K562 (cell line): ENCODE measurements at regions of chr7 and their contacts with region 1.

Region 1: DNA sequence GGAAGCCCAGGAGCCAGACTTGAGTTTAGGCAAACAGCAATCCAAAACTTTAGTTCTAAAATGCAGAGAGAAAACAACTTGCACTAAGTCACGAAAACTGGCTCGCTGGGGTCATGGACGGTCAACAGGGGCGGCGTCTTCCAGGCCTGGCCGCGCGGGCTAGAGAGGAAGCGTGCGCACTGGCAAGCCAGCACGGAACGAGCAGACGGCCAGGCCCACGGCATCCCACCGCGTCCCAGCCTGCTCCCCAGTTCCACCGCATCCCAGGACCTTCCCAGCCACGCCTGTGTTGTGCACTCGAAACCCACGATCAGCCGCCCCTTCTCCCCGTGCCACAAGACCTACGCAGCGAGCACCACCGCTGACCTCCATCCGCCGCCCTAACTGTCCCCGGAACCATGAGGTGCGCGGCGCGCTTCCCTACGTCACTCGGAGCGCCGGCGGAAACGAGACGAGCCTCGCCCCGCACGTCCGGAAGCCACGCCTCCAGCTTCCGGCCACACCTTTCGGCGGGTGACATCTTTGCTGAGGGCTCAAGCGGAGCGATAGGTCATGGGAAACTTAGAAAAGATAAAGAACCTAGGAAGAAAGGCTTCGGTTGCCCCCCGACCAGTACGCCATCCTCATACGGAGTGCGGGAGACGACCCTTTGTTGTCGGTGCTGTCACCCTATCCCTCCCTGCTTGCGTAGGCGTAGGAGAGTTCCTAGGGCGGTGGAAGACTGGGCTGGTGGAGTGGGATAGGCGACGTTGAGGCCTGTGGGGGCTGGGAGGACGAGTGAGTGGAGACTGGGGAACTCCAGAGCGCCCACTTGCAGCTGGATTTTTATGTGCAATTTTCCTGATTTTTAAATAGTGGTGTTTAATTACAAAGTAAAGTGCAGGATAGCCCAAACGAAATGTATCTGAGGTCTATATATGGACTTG is at the start of gene TBRG4:
- DNase-seq: peak; percentile 89 to 98 (median 91)
- ATAC-seq: peak; percentile 91
- H3K4me3 ChIP-seq: peak within 1 kb of the TSS; percentile 95
- H3K27ac ChIP-seq: peak within 1 kb of the TSS; percentile 99
- H3K4me1 ChIP-seq: peaks cover 12 to 24% of the 10 kb centered on the region in 2 experiments; a peak in 4 of 5 replicates
- H3K27me3 ChIP-seq: no peaks in the 10 kb centered on the region
- CTCF ChIP-seq: peak; percentile 57 to 73 (median 68)
- EP300 ChIP-seq: no peak; the same call in 1 of the 2 replicates
- POLR2A ChIP-seq: peak; percentile 99
- RAD21 ChIP-seq: peak in 1 of 2 experiments; percentile 17; a peak in 2 of 4 replicates
- polyA plus RNA-seq, gene TBRG4: 11.2 to 34.9 TPM

Region 2: DNA sequence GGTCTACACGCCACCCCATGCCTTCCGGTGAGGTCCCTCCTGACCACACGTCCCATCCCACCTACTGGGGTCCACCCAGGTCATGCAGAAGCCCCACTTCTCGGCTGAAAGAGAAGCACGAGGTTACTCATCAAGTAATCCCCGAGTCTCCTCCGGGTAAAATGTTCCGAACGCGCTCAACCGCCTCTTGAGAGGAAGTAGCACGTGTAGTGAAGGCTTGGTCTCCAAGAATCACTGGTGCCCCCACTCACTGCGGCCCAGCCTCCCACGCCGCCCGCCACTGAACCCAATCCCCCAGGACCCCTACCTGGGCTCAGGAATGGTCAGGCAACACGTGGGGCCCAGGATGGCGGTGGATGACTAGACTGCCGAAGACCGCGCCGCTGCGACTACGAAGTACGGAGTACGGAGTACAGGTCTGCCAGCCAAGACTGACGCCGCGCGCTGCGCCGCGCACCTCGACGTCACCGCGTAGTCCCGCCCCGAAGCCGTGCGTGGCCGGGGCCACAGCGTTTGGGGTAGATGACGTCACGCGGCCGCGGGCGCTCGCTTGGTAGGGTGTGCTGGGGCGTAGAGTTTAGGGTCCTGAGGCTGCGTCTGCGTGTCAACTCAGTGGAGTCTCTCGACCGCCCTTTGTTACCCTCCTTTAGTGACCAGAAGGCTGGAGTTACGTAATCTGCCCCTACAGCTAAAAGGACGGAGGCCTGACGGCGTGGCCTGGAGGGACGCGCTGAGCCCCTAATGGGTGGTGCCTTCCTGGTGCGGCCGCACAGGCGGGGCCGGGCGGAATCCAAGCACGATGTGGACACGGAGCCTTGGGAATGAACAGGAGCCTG is 125.1 kb before region 1 on chr7:
- CTCF ChIA-PET with region 1: no interaction called
- POLR2A ChIA-PET with region 1: interaction called, 11 read pairs
- in situ Hi-C with region 1: no loop called
- intact Hi-C with region 1: loop called (anchors 5 kb)
- DNase-seq: peak; percentile 81 to 98 (median 86)
- ATAC-seq: peak; percentile 85
- H3K4me3 ChIP-seq: peak overlapping the region; percentile 98
- H3K27ac ChIP-seq: peak overlapping the region; percentile 97
- H3K4me1 ChIP-seq: peaks cover 22 to 38% of the 10 kb centered on the region in 2 experiments; a peak in 4 of 5 replicates
- H3K27me3 ChIP-seq: no peaks in the 10 kb centered on the region
- CTCF ChIP-seq: no peak
- EP300 ChIP-seq: no peak; the same call in none of the 2 replicates
- POLR2A ChIP-seq: peak; percentile 99
- RAD21 ChIP-seq: 0 out of 4 replicates have a peak, but pooled peaks of 1 of the 2 experiments have one; percentile 6

Region 3: DNA sequence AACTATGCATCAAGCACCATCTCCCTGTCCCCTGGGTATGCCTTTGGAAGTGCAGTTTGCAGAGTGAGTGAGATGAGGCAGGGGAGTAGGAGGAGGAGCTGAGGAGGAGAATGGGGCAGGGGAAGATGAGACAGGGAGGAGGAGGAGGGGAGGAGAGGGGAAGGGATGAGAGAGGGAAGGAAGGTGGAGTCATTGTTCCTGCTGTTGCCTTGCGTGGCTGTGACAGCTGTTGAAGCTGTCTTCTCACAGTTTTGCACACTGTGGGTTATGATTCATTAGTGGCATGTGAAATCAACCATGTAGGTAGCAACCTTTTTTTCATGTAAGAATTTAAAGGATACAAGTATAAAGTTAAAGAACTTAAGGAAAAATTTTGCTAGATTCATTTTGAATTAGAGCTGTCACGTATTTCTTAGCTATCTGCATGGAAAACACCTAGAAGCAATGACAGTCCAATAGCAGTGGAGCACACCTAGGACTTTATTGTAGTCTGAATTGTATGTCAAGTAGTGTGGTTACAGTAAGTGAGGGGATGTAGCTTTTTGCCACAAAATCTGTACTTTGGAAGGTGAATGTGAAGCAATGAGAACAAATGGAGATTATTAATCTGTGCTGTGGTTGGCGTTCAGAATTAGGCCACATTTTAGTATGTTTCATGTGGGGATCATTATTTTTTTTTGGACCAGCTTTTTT is 89.8 kb before region 1 on chr7:
- CTCF ChIA-PET with region 1: no interaction called
- POLR2A ChIA-PET with region 1: no interaction called
- in situ Hi-C with region 1: no loop called
- intact Hi-C with region 1: no loop called
- DNase-seq: peak in 1 of 4 experiments; percentile 29
- ATAC-seq: peak; percentile 61
- H3K4me3 ChIP-seq: no peak overlapping the region
- H3K27ac ChIP-seq: no peak overlapping the region
- H3K4me1 ChIP-seq: peaks cover 4 to 6% of the 10 kb centered on the region in 2 experiments; a peak in 2 of 5 replicates
- H3K27me3 ChIP-seq: no peaks in the 10 kb centered on the region
- CTCF ChIP-seq: no peak
- EP300 ChIP-seq: no peak
- POLR2A ChIP-seq: no peak
- RAD21 ChIP-seq: no peak

Region 4: GRCh38 chr7:45098983-45099839 is 12.3 kb before region 1 on chr7:
- CTCF ChIA-PET with region 1: no interaction called
- POLR2A ChIA-PET with region 1: interaction called, 11 read pairs
- in situ Hi-C with region 1: no loop called
- intact Hi-C with region 1: no loop called
- DNase-seq: peak in 1 of 4 experiments; percentile 25
- ATAC-seq: peak; percentile 79
- H3K4me3 ChIP-seq: no peak overlapping the region
- H3K27ac ChIP-seq: no peak overlapping the region
- H3K4me1 ChIP-seq: peaks cover 0 to 13% of the 10 kb centered on the region in 2 experiments; a peak in 1 of 5 replicates
- H3K27me3 ChIP-seq: no peaks in the 10 kb centered on the region
- CTCF ChIP-seq: no peak
- EP300 ChIP-seq: no peak
- POLR2A ChIP-seq: peak; percentile 69
- RAD21 ChIP-seq: no peak

Region 5: DNA sequence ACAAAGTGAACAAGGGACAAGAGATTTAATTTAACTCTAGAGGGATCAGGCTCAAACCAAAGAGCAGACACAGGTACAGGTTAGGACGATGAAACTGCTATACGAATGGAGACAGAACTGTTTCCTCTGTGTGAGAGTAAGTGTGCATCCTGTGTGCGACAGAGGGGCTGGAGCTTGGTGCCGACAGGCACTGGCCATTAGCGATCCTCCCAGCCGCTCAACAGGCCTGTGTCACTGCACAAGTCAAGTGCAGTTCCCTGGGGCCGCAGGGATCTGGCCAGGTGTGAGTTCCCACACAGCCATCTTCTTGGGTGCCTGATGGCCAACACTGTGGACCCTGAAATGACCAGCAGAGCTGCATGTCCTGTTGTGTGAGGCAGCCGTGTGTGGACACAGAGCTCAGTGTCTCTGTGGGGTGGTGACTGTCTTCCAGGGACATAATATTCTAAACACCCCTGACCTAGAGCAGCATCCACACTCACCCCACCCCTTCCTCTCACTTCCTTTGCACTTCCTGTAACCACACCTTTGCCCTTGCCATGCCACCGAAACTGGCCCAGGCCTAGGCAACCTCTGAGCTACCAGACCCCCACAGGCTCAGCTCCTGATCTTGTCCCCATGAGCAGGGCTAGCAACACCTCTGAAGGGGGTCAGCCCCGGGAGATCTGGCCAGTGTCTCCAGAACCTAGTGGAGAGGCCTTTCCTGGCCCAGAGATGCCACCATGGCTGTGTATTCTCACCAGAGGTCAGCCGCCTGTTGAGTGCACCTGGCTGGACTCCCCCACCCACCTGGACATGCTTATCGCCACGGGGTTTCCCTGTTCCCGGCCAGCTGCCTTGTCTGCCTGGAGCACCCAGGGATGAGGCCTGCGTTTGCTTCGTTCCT is 11.7 kb after region 1 on chr7:
- CTCF ChIA-PET with region 1: no interaction called
- POLR2A ChIA-PET with region 1: interaction called, 23 read pairs
- in situ Hi-C with region 1: no loop called
- intact Hi-C with region 1: no loop called
- DNase-seq: no peak
- ATAC-seq: no peak; the same call in 2 of the 3 replicates
- H3K4me3 ChIP-seq: no peak overlapping the region
- H3K27ac ChIP-seq: no peak overlapping the region
- H3K4me1 ChIP-seq: peaks cover 0 to 27% of the 10 kb centered on the region in 2 experiments; a peak in 3 of 5 replicates
- H3K27me3 ChIP-seq: no peaks in the 10 kb centered on the region
- CTCF ChIP-seq: no peak
- EP300 ChIP-seq: no peak
- POLR2A ChIP-seq: no peak
- RAD21 ChIP-seq: no peak